Activated CD4-positive, alpha-beta T cell treated with anti-CD3 and anti-CD28 coated beads, Interleukin-2, amount 10 ng/mL, durations not matched to agents 24 days and 14 days (primary cell): ENCODE measurements at regions of chr21 and their contacts with region 1.

Region 1: GRCh38 chr21:15437883-15438282 is 291.9 kb upstream of the USP25 start:
- DNase-seq: peak; percentile 58
- H3K4me3 Mint-ChIP-seq: no peak overlapping the region
- H3K27ac Mint-ChIP-seq: no peak overlapping the region
- H3K4me1 Mint-ChIP-seq: peaks cover 7% of the 10 kb centered on the region
- H3K27me3 Mint-ChIP-seq: no peaks in the 10 kb centered on the region

Region 2: GRCh38 chr21:15275615-15276200 is 162.2 kb before region 1 on chr21:
- intact Hi-C with region 1: no loop called
- DNase-seq: no peak
- H3K4me3 Mint-ChIP-seq: no peak overlapping the region
- H3K27ac Mint-ChIP-seq: no peak overlapping the region
- H3K4me1 Mint-ChIP-seq: no peaks in the 10 kb centered on the region
- H3K27me3 Mint-ChIP-seq: no peaks in the 10 kb centered on the region

Region 3: DNA sequence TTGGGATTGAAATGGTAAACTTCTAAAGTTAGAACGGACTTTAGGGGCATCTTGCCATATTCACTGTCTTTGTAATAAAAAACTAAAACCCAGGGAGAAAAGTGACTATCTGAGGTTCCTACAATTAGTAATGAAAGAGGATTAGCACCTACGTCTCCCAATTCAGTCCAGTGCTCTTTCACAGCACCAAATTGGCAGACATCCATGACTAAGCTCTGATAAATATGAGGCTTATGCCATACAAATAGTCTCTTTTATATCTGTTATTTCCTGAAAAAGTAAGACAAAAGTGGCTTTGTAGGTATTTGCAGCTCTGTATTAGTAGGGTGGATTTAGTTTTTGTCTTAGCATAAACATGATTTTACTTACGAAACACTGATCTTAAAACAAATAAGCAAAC is 58.1 kb before region 1 on chr21:
- intact Hi-C with region 1: no loop called
- DNase-seq: no peak
- H3K4me3 Mint-ChIP-seq: no peak overlapping the region
- H3K27ac Mint-ChIP-seq: no peak overlapping the region
- H3K4me1 Mint-ChIP-seq: no peaks in the 10 kb centered on the region
- H3K27me3 Mint-ChIP-seq: no peaks in the 10 kb centered on the region

Region 4: GRCh38 chr21:15422783-15423182 is 15.1 kb before region 1 on chr21:
- intact Hi-C with region 1: loop called (anchors 1 kb)
- DNase-seq: no peak
- H3K4me3 Mint-ChIP-seq: no peak overlapping the region
- H3K27ac Mint-ChIP-seq: peak overlapping the region; percentile 21
- H3K4me1 Mint-ChIP-seq: peaks cover 12% of the 10 kb centered on the region
- H3K27me3 Mint-ChIP-seq: peaks cover 3% of the 10 kb centered on the region

Region 5: GRCh38 chr21:15449556-15449955 is 11.7 kb after region 1 on chr21:
- intact Hi-C with region 1: no loop called
- DNase-seq: no peak
- H3K4me3 Mint-ChIP-seq: no peak overlapping the region
- H3K27ac Mint-ChIP-seq: no peak overlapping the region
- H3K4me1 Mint-ChIP-seq: no peaks in the 10 kb centered on the region
- H3K27me3 Mint-ChIP-seq: no peaks in the 10 kb centered on the region

Region 6: GRCh38 chr21:15462092-15462491 is 24.2 kb after region 1 on chr21:
- intact Hi-C with region 1: no loop called
- DNase-seq: no peak
- H3K4me3 Mint-ChIP-seq: no peak overlapping the region
- H3K27ac Mint-ChIP-seq: no peak overlapping the region
- H3K4me1 Mint-ChIP-seq: no peaks in the 10 kb centered on the region
- H3K27me3 Mint-ChIP-seq: peaks cover 2% of the 10 kb centered on the region

Region 7: GRCh38 chr21:15483138-15483780 is 45.4 kb after region 1 on chr21:
- intact Hi-C with region 1: loop called (anchors 5 kb)
- DNase-seq: peak; percentile 92
- H3K4me3 Mint-ChIP-seq: no peak overlapping the region
- H3K27ac Mint-ChIP-seq: no peak overlapping the region
- H3K4me1 Mint-ChIP-seq: peaks cover 17% of the 10 kb centered on the region
- H3K27me3 Mint-ChIP-seq: peaks cover 3% of the 10 kb centered on the region

Region 8: GRCh38 chr21:15514073-15514946 is 76.4 kb after region 1 on chr21:
- intact Hi-C with region 1: loop called (anchors 5 kb)
- DNase-seq: peak; percentile 90
- H3K4me3 Mint-ChIP-seq: peak overlapping the region; percentile 29
- H3K27ac Mint-ChIP-seq: peak overlapping the region; percentile 61
- H3K4me1 Mint-ChIP-seq: peaks cover 18% of the 10 kb centered on the region
- H3K27me3 Mint-ChIP-seq: no peaks in the 10 kb centered on the region